ENCODE measurements at regions of chr5 and their contacts with region 1.

Region 1: DNA sequence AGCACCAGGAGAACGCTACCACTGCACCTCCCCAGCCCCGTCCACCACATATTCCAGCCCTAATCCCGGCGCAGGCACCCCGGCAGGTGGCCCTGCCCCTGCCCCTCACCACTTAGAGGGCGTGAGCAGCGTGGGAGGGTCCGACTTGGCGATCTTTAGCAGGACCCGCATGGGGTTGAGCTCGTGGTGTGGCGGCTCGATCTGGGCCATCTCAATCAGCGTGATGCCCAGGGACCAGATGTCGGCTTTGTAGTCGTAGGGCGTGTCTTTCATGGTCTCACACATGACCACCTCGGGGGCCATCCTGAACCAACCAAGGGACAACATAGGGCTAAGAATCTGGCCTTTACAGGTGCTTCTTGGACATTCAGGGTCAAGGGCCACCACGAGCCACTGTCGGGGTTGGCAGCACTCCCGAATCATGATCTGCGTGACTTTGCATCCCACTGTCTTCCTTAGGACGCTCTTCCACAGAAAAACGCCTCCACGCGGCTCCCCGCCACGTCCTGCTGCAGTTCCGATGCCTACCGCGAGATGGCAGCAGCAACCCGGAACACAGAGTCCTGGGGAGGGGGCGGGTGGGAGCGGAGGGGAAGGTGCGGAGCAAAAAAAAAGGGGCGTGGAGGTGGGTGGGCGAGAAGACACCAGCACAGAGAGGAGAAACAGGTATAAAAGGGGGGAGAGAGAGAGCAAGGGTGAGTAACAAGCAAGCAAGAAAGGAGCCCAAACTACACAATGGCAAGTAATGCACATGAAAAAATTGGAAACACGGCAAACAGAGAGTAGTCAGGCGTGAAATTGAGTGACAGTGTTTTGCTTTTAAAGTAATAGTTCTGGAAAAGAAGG is 81.3 kb downstream of the STK10 start:
- DNase-seq: no peak
- H3K4me3 ChIP-seq: peak overlapping the region in 3 of 4 donors; percentile 9 to 49 (median 26)
- H3K27ac ChIP-seq: no peak overlapping the region
- H3K4me1 ChIP-seq: peaks cover 34 to 58% (median 41%) of the 10 kb centered on the region in 3 donors
- H3K27me3 ChIP-seq: no peaks in the 10 kb centered on the region
- CTCF ChIP-seq: peak; percentile 86 to 100 (median 91)
- POLR2A ChIP-seq: no peak

Region 2: GRCh38 chr5:172188033-172188892 is 81.5 kb after region 1 on chr5 and contains the start of gene STK10:
- intact Hi-C with region 1: loop called (anchors 5 kb)
- DNase-seq: peak; percentile 69
- H3K4me3 ChIP-seq: peak within 1 kb of the TSS; percentile 48 to 87 (median 72)
- H3K27ac ChIP-seq: peak within 1 kb of the TSS; percentile 83 to 92 (median 90)
- H3K4me1 ChIP-seq: peaks cover 22 to 52% (median 22%) of the 10 kb centered on the region in 3 donors
- H3K27me3 ChIP-seq: peaks cover 0 to 16% (median 0%) of the 10 kb centered on the region in 4 donors
- CTCF ChIP-seq: peak; percentile 80 to 94 (median 86)
- POLR2A ChIP-seq: peak in 2 of 4 donors; percentile 68 to 71
- total RNA-seq, gene STK10: 5.4 to 15.6 (median 8.9) TPM

Region 3: GRCh38 chr5:172293054-172293744 is 186.5 kb after region 1 on chr5:
- intact Hi-C with region 1: loop called (anchors 10 kb)
- DNase-seq: no peak
- H3K4me3 ChIP-seq: no peak overlapping the region
- H3K27ac ChIP-seq: no peak overlapping the region
- H3K4me1 ChIP-seq: peaks cover 0 to 9% (median 4%) of the 10 kb centered on the region in 3 donors
- H3K27me3 ChIP-seq: no peaks in the 10 kb centered on the region
- CTCF ChIP-seq: peak; percentile 58 to 89 (median 78)
- POLR2A ChIP-seq: no peak

Measured in esophagus squamous epithelium (tissue), 5 donors.